AG04449 (cell line): ENCODE measurements at regions of chr11 and their contacts with region 1.

Region 1: GRCh38 chr11:125345421-125346178 is 150.5 kb downstream of the FEZ1 start:
- DNase-seq: no peak
- H3K4me3 ChIP-seq: no peak overlapping the region
- CTCF ChIP-seq: peak; percentile 80

Region 2: GRCh38 chr11:124970925-124971324 is 374.7 kb before region 1 on chr11:
- CTCF ChIA-PET with region 1: interaction called, 10 read pairs
- POLR2A ChIA-PET with region 1: no interaction called
- DNase-seq: no peak
- H3K4me3 ChIP-seq: no peak overlapping the region
- CTCF ChIP-seq: no peak

Region 3: GRCh38 chr11:125148743-125149142 is 196.9 kb before region 1 on chr11:
- CTCF ChIA-PET with region 1: interaction called, 12 read pairs
- POLR2A ChIA-PET with region 1: no interaction called
- DNase-seq: no peak
- H3K4me3 ChIP-seq: no peak overlapping the region
- CTCF ChIP-seq: no peak

Region 4: GRCh38 chr11:125174686-125175085 is 170.9 kb before region 1 on chr11:
- CTCF ChIA-PET with region 1: interaction called, 10 read pairs
- POLR2A ChIA-PET with region 1: no interaction called
- DNase-seq: no peak
- H3K4me3 ChIP-seq: no peak overlapping the region
- CTCF ChIP-seq: no peak

Region 5: GRCh38 chr11:125390946-125391345 is 45.3 kb after region 1 on chr11:
- CTCF ChIA-PET with region 1: interaction called, 202 read pairs
- POLR2A ChIA-PET with region 1: no interaction called
- DNase-seq: peak; percentile 26
- H3K4me3 ChIP-seq: no peak overlapping the region
- CTCF ChIP-seq: no peak

Region 6: DNA sequence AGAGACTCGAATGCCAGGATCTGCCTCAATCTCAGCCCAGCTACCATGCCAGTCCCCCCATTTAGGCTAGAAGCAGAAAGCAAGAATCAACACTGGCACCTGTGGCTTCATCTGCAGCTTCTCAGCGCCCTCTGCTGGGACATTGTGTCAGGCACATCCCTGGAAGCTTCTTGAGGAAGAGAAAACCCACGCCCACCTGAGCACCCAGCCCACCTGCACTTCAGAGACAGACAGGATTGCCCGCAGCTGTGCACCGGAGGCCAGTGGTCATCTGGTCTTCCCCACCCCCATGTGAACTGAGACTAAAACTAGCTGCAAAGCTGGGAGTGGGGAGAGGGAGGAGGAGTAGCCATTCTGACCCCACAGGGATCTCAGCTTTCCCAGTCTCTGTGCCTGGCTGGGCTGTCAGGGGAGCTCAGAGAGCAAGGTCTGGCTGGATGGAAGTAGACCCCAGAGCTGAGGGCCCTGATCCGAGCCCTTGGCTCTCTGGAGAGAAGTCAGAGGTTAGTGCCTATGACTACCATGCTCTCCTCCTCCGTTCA is 83.6 kb after region 1 on chr11:
- CTCF ChIA-PET with region 1: interaction called, 25 read pairs
- POLR2A ChIA-PET with region 1: no interaction called
- DNase-seq: no peak
- H3K4me3 ChIP-seq: no peak overlapping the region
- CTCF ChIP-seq: peak; percentile 85